ENCODE measurements at regions of chr12 and their contacts with region 1.

Region 1: DNA sequence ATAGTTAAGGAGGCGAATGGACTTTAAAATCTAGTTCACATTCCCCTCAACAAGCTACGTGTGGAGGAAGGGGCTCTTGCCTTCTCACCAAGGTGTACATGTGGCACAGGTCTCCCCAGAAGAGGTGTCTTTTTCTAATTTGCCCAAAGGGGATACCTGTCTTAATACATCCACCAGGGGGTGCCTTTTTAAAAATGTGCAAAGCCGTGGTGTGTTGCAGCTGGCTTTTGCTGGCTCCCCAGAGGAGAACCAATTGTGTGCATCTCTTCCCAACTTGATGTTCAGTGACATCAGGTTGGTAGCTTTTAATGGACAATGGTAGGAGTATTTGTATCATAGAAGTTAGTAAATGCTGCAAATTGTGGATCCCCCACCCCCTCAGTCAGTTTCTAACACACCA is 33.8 kb downstream of the CREBL2 start:
- DNase-seq: peak in 1 of 2 donors; percentile 80
- ATAC-seq: peak; percentile 67 to 83 (median 80)
- H3K4me3 ChIP-seq: no peak overlapping the region
- H3K4me3 Mint-ChIP-seq: no peak overlapping the region
- H3K27ac ChIP-seq: no peak overlapping the region
- H3K27ac Mint-ChIP-seq: peak overlapping the region in 1 of 2 donors; percentile 44
- H3K4me1 ChIP-seq: no peaks in the 10 kb centered on the region
- H3K4me1 Mint-ChIP-seq: no peaks in the 10 kb centered on the region
- H3K27me3 ChIP-seq: no peaks in the 10 kb centered on the region
- H3K27me3 Mint-ChIP-seq: no peaks in the 10 kb centered on the region
- CTCF ChIP-seq: peak; percentile 67

Region 2: DNA sequence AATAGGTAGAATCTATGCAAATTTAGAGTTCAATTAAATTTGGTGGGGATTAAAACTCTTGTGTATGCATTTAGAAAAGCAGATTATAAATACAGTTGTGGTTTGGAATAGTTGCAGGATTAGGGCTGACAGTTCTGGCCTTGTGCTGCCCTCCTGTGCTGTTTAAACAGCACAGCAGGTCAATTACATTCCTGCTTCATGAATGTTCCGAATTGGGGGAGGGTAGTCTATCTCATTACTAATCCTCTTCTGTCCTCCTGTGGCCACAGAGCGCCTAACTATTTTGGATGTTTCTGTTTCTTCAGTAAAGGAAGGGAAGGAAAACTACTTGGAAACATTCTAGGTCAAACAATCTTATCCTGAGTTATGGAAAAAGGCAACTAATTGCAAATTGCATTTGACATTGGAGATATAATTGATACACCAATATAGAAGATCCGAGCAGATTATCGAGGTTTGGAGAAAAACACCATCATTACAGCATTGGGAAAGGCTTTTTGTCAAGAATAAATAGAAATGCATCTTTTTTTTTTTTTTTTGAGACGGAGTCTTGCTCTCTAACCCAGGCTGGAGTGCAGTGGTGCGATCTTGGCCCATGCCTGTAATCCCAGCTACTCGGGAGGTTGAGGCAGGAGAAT is 59.2 kb after region 1 on chr12:
- intact Hi-C with region 1: loop called (anchors 1 kb)
- DNase-seq: peak in 1 of 2 donors; percentile 80
- ATAC-seq: peak; percentile 90 to 99 (median 93)
- H3K4me3 ChIP-seq: no peak overlapping the region
- H3K4me3 Mint-ChIP-seq: peak overlapping the region; percentile 62
- H3K27ac ChIP-seq: no peak overlapping the region
- H3K27ac Mint-ChIP-seq: peak overlapping the region; percentile 68 to 77
- H3K4me1 ChIP-seq: peaks cover 23% of the 10 kb centered on the region
- H3K4me1 Mint-ChIP-seq: peaks cover 15 to 17% of the 10 kb centered on the region in 2 donors
- H3K27me3 ChIP-seq: no peaks in the 10 kb centered on the region
- H3K27me3 Mint-ChIP-seq: no peaks in the 10 kb centered on the region
- CTCF ChIP-seq: peak; percentile 82

Region 3: GRCh38 chr12:12736759-12737676 is 91.5 kb after region 1 on chr12:
- intact Hi-C with region 1: loop called (anchors 1 kb)
- DNase-seq: peak; percentile 59 to 80
- ATAC-seq: peak; percentile 85 to 93 (median 91)
- H3K4me3 ChIP-seq: peak overlapping the region; percentile 43
- H3K4me3 Mint-ChIP-seq: peak overlapping the region; percentile 77
- H3K27ac ChIP-seq: peak overlapping the region; percentile 92
- H3K27ac Mint-ChIP-seq: peak overlapping the region; percentile 94
- H3K4me1 ChIP-seq: peaks cover 30% of the 10 kb centered on the region
- H3K4me1 Mint-ChIP-seq: peaks cover 31% of the 10 kb centered on the region in 2 donors
- H3K27me3 ChIP-seq: no peaks in the 10 kb centered on the region
- H3K27me3 Mint-ChIP-seq: no peaks in the 10 kb centered on the region
- CTCF ChIP-seq: peak; percentile 73

Region 4: GRCh38 chr12:12774791-12775190 is 129.3 kb after region 1 on chr12:
- intact Hi-C with region 1: no loop called
- DNase-seq: no peak
- ATAC-seq: no peak
- H3K4me3 ChIP-seq: no peak overlapping the region
- H3K4me3 Mint-ChIP-seq: no peak overlapping the region
- H3K27ac ChIP-seq: no peak overlapping the region
- H3K27ac Mint-ChIP-seq: no peak overlapping the region
- H3K4me1 ChIP-seq: no peaks in the 10 kb centered on the region
- H3K4me1 Mint-ChIP-seq: no peaks in the 10 kb centered on the region
- H3K27me3 ChIP-seq: no peaks in the 10 kb centered on the region
- H3K27me3 Mint-ChIP-seq: no peaks in the 10 kb centered on the region
- CTCF ChIP-seq: no peak

Region 5: DNA sequence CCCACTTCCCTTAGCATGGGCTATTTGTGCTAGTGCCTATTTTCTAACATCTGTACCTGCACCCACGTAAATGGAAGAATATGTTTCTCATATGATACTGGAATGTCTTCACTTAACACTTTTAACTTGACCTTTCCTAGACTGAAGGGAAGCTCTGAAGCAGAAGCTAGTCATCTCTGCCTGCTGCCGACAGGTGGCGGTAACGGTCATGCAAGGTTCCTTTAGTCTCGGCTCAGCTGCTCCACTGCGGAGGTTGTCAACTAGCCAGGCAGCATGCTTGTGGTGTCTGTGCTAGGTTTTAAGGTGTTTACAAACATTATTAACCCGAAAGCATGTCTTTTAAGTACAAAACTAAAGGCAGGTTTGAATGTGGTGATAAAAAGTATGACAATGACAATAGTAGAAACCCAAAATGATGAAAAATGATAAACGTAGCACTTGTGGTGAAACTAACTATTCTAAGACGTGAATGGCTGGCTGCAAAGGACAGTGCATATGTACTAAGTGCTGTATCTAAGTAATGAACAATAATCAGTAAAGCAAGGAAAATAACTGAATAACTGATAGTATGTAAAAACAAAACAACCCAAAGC is 1218.7 kb after region 1 on chr12:
- intact Hi-C with region 1: no loop called
- DNase-seq: peak; percentile 18 to 60
- ATAC-seq: peak in 2 of 3 donors; percentile 54 to 66
- H3K4me3 ChIP-seq: no peak overlapping the region
- H3K4me3 Mint-ChIP-seq: no peak overlapping the region
- H3K27ac ChIP-seq: no peak overlapping the region
- H3K27ac Mint-ChIP-seq: no peak overlapping the region
- H3K4me1 ChIP-seq: no peaks in the 10 kb centered on the region
- H3K4me1 Mint-ChIP-seq: no peaks in the 10 kb centered on the region
- H3K27me3 ChIP-seq: no peaks in the 10 kb centered on the region
- H3K27me3 Mint-ChIP-seq: peaks cover 4 to 10% of the 10 kb centered on the region in 2 donors
- CTCF ChIP-seq: peak; percentile 75

Measured in natural killer cell (primary cell).